ENCODE measurements at regions of chr5 and their contacts with region 1.

Region 1: GRCh38 chr5:83712001-83712601 is 8.6 kb downstream of the HAPLN1 start:
- DNase-seq: peak; percentile 30

Region 2: GRCh38 chr5:83608122-83608521 is 104.0 kb before region 1 on chr5:
- CTCF ChIA-PET with region 1: interaction called, 10 read pairs
- POLR2A ChIA-PET with region 1: no interaction called
- DNase-seq: peak; percentile 65